ENCODE measurements at regions of chr1 and their contacts with region 1.

Region 1: DNA sequence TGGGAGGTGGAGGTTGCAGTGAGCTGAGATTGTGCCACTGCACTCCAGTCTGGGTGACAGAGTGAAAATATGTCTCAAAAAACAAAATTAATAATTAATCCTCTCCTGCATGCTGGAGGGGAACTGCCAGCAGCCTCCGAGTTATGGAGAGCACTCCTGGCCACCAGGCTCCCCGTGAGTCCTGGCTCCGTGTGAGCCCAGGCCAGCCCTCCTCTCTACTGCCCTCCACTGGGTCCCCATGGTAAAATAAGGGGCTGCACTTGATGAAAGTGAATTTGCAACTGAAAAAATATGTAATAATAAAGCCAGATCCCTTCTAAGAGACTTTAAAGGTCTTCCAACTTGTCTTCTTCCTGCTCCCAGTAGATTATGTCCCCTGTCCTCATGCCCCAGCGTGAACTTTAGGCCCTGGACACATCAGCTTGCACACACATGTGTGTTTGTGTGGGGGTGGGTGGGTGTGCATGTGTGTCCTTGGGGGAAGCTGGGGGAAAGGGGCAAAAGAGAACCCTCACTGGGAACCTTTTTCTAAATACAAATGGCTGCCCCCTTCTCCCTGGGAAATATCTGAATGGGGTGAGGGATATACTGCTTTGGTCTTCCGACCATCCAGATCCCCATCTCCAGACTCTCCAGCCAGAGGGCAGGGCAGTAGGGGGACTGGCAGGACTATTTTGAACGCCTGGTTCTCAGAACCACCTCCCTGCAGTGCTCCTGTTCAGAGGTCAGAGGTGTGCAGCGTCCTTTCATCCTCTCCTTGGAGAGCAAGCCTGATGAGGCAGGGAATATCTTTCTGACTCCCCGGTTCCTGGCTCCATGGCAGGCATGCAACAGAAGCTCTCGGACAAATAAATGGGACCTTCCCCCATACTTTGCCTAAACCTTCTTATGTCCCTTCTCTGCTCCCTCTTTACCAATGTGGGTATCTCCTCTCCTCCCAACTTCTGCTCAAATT is 26.2 kb downstream of the NEK2 start:
- DNase-seq: no peak
- ATAC-seq: peak; percentile 63 to 87 (median 85)
- H3K4me3 ChIP-seq: no peak overlapping the region
- H3K27ac ChIP-seq: peak overlapping the region in 1 of 10 donors; percentile 28
- H3K4me1 ChIP-seq: peaks cover 0 to 12% (median 0%) of the 10 kb centered on the region in 9 donors
- H3K27me3 ChIP-seq: no peaks in the 10 kb centered on the region
- CTCF ChIP-seq: peak in 7 of 9 donors; percentile 39 to 77 (median 58)

Region 2: DNA sequence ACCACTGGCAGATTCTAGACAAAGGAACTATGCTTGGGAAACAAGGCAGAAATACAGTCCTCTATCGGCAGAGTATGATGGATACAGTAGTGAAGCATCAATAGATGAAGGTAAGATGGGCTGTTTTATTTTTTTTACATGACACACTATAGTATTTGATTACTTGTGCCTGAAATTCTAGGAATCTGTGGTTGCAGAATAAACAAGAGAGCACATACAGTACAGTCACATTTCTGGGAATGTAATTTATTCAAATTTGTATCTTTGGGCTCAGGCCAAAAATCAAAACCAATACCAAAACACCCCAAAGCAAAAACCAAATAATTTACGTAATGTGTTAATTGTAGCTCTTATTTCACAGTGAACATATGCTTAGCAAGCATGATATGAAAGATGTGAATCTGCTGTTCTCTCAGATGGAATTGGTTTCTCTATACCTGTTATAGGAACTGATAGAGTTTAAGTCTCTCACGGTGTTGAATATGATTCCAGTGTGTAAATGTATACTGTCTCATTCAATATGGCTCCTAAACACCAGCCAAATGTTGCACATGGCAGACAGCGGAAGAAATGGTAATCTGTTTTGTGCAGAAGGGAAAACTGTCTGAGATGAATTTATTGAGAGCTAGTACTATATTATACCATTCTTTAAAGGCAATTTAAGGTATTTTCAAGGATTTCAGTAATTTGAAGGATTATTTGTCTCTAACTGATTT is 1628.0 kb before region 1 on chr1:
- intact Hi-C with region 1: no loop called
- DNase-seq: no peak
- ATAC-seq: no peak
- H3K4me3 ChIP-seq: no peak overlapping the region
- H3K27ac ChIP-seq: no peak overlapping the region
- H3K4me1 ChIP-seq: no peaks in the 10 kb centered on the region
- H3K27me3 ChIP-seq: peaks cover 0 to 2% (median 0%) of the 10 kb centered on the region in 7 donors
- CTCF ChIP-seq: no peak

Region 3: GRCh38 chr1:211476200-211476849 is 172.9 kb before region 1 on chr1:
- intact Hi-C with region 1: loop called in 3 of 10 experiments (anchors 1 to 5 kb)
- DNase-seq: peak; percentile 44 to 67
- ATAC-seq: peak in 4 of 8 donors; percentile 43 to 64 (median 57)
- H3K4me3 ChIP-seq: no peak overlapping the region
- H3K27ac ChIP-seq: no peak overlapping the region
- H3K4me1 ChIP-seq: peaks cover 0 to 9% (median 5%) of the 10 kb centered on the region in 9 donors
- H3K27me3 ChIP-seq: peaks cover 0 to 32% (median 20%) of the 10 kb centered on the region in 7 donors
- CTCF ChIP-seq: peak; percentile 54 to 92 (median 80)

Region 4: GRCh38 chr1:211589782-211590721 is 59.2 kb before region 1 on chr1:
- intact Hi-C with region 1: no loop called
- DNase-seq: peak; percentile 33 to 55
- ATAC-seq: peak; percentile 65 to 90 (median 78)
- H3K4me3 ChIP-seq: no peak overlapping the region
- H3K27ac ChIP-seq: peak overlapping the region in 5 of 10 donors; percentile 12 to 52 (median 48)
- H3K4me1 ChIP-seq: peaks cover 0 to 45% (median 6%) of the 10 kb centered on the region in 9 donors
- H3K27me3 ChIP-seq: no peaks in the 10 kb centered on the region
- CTCF ChIP-seq: no peak

Region 5: DNA sequence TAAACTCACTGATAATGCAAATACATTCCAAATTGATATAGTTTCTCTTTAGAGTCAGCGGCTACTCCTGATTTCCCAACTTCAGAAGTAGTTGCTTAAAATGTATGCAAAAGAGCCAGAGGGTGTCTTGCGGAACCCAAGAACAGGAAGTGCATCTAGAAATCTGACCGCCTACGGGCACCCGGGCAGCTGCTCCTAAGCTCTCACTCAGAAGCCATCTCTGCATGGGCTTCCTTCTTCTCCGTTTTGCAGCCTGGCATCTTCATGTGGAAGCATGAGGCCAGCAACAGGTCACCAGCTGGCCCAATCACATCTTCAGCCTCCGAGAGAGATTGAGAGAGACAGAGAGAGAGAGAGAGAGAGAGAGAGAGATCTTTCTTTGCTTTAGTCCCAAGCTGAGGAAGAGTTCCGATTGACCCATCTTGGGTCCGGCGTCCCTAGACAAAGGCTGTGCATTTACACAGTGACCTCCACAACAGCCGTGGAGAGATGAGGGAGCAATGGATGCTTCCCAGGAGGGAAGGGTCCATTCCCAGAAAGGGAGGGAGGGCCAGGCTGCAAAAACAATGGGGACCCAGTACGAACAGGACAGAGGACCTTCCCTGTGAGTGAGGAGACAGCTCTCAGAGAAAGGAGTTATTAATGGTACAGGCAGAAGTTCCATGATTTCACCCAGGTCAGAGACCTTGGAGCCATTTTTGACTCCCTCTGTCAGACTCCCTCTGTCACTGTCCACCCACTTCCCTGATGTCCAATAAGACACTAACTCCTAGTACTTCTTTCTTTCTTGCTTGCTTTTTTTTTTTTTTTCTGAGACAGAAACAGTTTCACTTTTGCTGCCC is 42.1 kb before region 1 on chr1:
- intact Hi-C with region 1: no loop called
- DNase-seq: no peak
- ATAC-seq: peak in 6 of 8 donors; percentile 36 to 71 (median 55)
- H3K4me3 ChIP-seq: peak overlapping the region in 5 of 10 donors; percentile 9 to 48 (median 22)
- H3K27ac ChIP-seq: peak overlapping the region in 4 of 10 donors; percentile 4 to 90 (median 44)
- H3K4me1 ChIP-seq: peaks cover 0 to 50% (median 10%) of the 10 kb centered on the region in 9 donors
- H3K27me3 ChIP-seq: no peaks in the 10 kb centered on the region
- CTCF ChIP-seq: no peak

Region 6: GRCh38 chr1:211684791-211685190 is 35.5 kb after region 1 on chr1:
- intact Hi-C with region 1: no loop called
- DNase-seq: no peak
- ATAC-seq: no peak
- H3K4me3 ChIP-seq: no peak overlapping the region
- H3K27ac ChIP-seq: no peak overlapping the region
- H3K4me1 ChIP-seq: peaks cover 0 to 12% (median 0%) of the 10 kb centered on the region in 9 donors
- H3K27me3 ChIP-seq: peaks cover 0 to 8% (median 0%) of the 10 kb centered on the region in 7 donors
- CTCF ChIP-seq: no peak